SK-N-SH (cell line): ENCODE measurements at regions of chr16 and their contacts with region 1.

Region 1: GRCh38 chr16:67641779-67642708 is 2.9 kb upstream of the CARMIL2 start:
- DNase-seq: no peak
- H3K4me3 ChIP-seq: no peak overlapping the region
- H3K27ac ChIP-seq: no peak overlapping the region
- H3K4me1 ChIP-seq: peaks cover 0 to 4% of the 10 kb centered on the region in 2 experiments; a peak in 1 of 4 replicates
- H3K27me3 ChIP-seq: no peaks in the 10 kb centered on the region
- CTCF ChIP-seq: no peak
- EP300 ChIP-seq: no peak
- RAD21 ChIP-seq: no peak

Region 2: GRCh38 chr16:67499106-67499505 is 142.9 kb before region 1 on chr16:
- CTCF ChIA-PET with region 1: interaction called, 10 read pairs
- POLR2A ChIA-PET with region 1: no interaction called
- DNase-seq: no peak
- H3K4me3 ChIP-seq: no peak overlapping the region
- H3K27ac ChIP-seq: no peak overlapping the region
- H3K4me1 ChIP-seq: no peaks in the 10 kb centered on the region
- H3K27me3 ChIP-seq: no peaks in the 10 kb centered on the region
- CTCF ChIP-seq: no peak
- EP300 ChIP-seq: no peak
- RAD21 ChIP-seq: no peak

Region 3: DNA sequence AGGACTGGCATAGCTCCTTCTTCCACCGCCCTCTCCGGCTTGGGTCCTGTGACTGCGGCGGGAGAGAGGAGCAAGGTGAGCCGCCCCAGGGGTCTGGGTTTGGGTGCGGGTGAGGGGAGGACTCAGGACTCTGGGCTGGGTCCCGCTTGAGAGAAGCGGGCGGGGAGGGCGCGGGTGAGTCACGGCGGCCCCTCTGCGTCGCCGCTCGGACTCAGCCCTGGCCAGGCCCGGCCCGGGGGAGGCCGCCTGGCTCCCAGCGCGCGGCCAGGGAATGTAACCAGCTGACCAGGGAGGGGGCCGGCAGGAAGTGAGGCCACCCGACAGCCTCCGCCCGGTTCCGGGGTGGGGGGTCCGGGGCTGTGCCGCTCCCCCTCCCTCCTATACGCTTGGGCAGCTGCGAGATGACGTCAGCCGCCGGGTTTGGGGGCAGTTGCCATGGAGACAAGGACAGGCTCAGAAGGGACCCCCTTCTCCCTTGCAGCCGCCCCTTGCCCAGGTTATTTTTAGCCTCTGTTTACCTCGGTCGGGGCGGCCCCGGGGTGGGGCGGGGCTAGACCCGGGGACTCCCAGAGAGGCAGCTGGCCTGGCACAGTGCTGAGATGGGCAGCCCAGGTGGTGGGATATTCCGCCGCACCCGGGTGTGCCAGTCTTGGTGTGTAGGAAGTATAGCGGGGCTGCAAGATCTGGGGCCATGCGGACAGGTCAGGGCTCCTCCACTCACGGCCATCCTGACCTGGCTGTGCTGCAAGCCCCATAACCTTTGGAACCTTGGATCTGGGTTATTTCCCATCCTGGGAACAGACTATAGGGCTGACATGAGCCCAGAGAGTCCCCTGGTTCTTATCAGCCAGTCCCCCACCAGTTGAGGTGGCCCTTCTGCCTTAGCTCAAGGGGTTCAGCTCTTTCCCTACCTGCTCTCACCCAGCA is 111.8 kb before region 1 on chr16:
- CTCF ChIA-PET with region 1: interaction called, 25 read pairs
- POLR2A ChIA-PET with region 1: no interaction called
- DNase-seq: peak; percentile 89
- H3K4me3 ChIP-seq: peak overlapping the region; percentile 77 to 99
- H3K27ac ChIP-seq: peak overlapping the region; percentile 83; a peak in 3 of 4 replicates
- H3K4me1 ChIP-seq: peaks cover 21% of the 10 kb centered on the region in 2 experiments; a peak in 3 of 4 replicates
- H3K27me3 ChIP-seq: no peaks in the 10 kb centered on the region
- CTCF ChIP-seq: no peak
- EP300 ChIP-seq: 0 out of 4 replicates have a peak, but pooled peaks of 1 of the 2 experiments have one; percentile 6
- RAD21 ChIP-seq: no peak

Region 4: GRCh38 chr16:67613808-67614207 is 28.2 kb before region 1 on chr16:
- CTCF ChIA-PET with region 1: interaction called, 12 read pairs
- POLR2A ChIA-PET with region 1: interaction called, 4 read pairs
- DNase-seq: no peak
- H3K4me3 ChIP-seq: no peak overlapping the region
- H3K27ac ChIP-seq: no peak overlapping the region
- H3K4me1 ChIP-seq: no peaks in the 10 kb centered on the region
- H3K27me3 ChIP-seq: no peaks in the 10 kb centered on the region
- CTCF ChIP-seq: peak; percentile 25; the same call in 1 of the 2 replicates
- EP300 ChIP-seq: no peak
- RAD21 ChIP-seq: no peak

Region 5: GRCh38 chr16:67672739-67673662 is 31.0 kb after region 1 on chr16:
- CTCF ChIA-PET with region 1: interaction called, 13 read pairs
- POLR2A ChIA-PET with region 1: no interaction called
- DNase-seq: peak; percentile 84
- H3K4me3 ChIP-seq: no peak overlapping the region; a peak in 1 of 4 replicates
- H3K27ac ChIP-seq: peak overlapping the region; percentile 32 to 69; a peak in 3 of 4 replicates
- H3K4me1 ChIP-seq: peaks cover 15 to 31% of the 10 kb centered on the region in 2 experiments; a peak in 2 of 4 replicates
- H3K27me3 ChIP-seq: no peaks in the 10 kb centered on the region
- CTCF ChIP-seq: peak; percentile 76
- EP300 ChIP-seq: no peak
- RAD21 ChIP-seq: peak; percentile 82

Region 6: GRCh38 chr16:67697422-67698185 is 55.6 kb after region 1 on chr16:
- CTCF ChIA-PET with region 1: no interaction called
- POLR2A ChIA-PET with region 1: no interaction called
- DNase-seq: no peak
- H3K4me3 ChIP-seq: no peak overlapping the region
- H3K27ac ChIP-seq: no peak overlapping the region
- H3K4me1 ChIP-seq: no peaks in the 10 kb centered on the region
- H3K27me3 ChIP-seq: no peaks in the 10 kb centered on the region
- CTCF ChIP-seq: no peak
- EP300 ChIP-seq: no peak
- RAD21 ChIP-seq: no peak